ENCODE measurements at regions of chr1 and their contacts with region 1.

Region 1: DNA sequence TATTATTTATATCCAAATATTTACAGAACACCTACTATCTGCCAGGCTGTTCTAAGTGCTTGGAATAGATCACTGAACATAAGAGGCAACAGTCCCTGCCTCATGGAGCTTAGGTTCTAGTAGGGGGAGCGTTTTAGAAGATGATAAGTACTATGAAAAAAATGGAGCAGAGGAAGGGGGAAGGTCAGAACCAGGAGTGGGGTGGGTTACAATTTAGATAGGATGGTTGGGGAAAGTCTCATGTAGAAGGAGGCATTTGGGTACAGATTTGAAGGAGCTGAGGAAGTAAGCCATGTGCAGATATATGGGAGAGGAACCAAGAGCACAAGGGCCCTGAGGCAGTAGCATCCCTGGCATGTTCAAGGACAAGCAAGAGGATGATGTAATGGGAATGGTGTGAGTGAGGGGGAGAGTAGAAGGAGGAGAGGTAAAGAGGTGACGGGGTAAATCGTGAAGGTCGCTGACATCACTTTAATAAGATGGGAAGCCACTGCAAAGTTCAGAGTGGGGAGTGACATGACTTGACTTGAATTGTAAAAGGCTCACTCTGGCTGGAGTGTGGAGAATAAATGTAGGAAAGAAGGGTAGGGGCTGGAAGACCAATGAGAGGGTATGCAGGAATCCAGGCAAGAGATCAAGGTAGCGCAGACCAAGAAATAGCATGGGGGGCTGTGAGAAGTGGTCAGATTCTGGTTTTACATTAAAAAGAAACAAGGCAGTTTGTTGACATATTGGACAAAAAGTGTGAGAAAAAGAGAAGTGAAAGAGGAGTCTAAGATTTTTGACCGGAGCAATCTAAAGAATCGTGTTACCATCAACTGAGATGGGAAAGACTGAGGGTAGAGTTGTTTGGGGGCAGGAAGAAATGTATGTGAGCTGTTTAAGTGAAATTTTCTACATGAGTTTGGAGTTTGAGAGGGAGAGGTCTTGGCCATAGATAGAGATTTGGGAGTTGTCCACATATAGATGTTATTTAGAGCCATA is 92.6 kb downstream of the LPAR3 start:
- DNase-seq: no peak
- H3K4me3 ChIP-seq: no peak overlapping the region
- H3K27ac ChIP-seq: no peak overlapping the region
- H3K4me1 ChIP-seq: no peaks in the 10 kb centered on the region
- H3K27me3 ChIP-seq: no peaks in the 10 kb centered on the region
- CTCF ChIP-seq: no peak
- EP300 ChIP-seq: no peak
- POLR2A ChIP-seq: no peak

Region 2: GRCh38 chr1:84772428-84772943 is 27.9 kb before region 1 on chr1:
- intact Hi-C with region 1: loop called in 1 of 4 experiments (anchors 2 kb)
- DNase-seq: peak; percentile 72 to 84 (median 76)
- H3K4me3 ChIP-seq: no peak overlapping the region
- H3K27ac ChIP-seq: no peak overlapping the region
- H3K4me1 ChIP-seq: no peaks in the 10 kb centered on the region
- H3K27me3 ChIP-seq: no peaks in the 10 kb centered on the region
- CTCF ChIP-seq: peak; percentile 63 to 70 (median 66)
- EP300 ChIP-seq: no peak
- POLR2A ChIP-seq: no peak